CD4-positive, alpha-beta memory T cell (primary cell): ENCODE measurements at regions of chr7 and their contacts with region 1.

Region 1: DNA sequence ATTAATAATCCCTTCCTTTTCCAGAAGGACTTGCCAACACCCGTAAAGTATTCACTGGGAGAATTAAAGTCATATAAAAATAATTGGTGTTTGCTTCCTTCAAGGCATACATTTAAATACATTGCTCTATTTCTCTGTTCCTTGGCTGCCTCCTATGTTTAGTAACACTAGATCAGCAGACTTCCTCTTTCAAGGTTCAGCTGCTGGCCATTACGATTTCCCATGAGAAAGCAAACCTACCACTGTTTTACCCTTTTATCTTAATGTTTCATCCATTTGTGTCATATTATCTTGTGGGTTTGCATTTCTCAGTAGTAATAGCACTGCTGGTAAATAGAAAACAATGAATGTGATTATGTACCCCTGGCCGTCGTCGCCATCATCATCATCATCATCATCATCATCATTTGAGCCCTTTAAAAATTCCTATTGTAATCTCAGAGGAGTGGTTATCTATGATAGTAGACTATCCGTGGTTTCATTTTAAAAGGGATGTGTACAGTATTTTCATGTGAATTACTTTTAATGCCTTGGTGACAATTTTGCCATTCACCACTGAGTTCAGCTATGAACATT is 313.8 kb upstream of the BMPER start:
- DNase-seq: no peak
- H3K4me3 ChIP-seq: no peak overlapping the region
- H3K4me3 Mint-ChIP-seq: no peak overlapping the region
- H3K27ac ChIP-seq: no peak overlapping the region
- H3K27ac Mint-ChIP-seq: no peak overlapping the region
- H3K4me1 ChIP-seq: no peaks in the 10 kb centered on the region
- H3K4me1 Mint-ChIP-seq: no peaks in the 10 kb centered on the region
- H3K27me3 ChIP-seq: no peaks in the 10 kb centered on the region
- H3K27me3 Mint-ChIP-seq: no peaks in the 10 kb centered on the region

Region 2: DNA sequence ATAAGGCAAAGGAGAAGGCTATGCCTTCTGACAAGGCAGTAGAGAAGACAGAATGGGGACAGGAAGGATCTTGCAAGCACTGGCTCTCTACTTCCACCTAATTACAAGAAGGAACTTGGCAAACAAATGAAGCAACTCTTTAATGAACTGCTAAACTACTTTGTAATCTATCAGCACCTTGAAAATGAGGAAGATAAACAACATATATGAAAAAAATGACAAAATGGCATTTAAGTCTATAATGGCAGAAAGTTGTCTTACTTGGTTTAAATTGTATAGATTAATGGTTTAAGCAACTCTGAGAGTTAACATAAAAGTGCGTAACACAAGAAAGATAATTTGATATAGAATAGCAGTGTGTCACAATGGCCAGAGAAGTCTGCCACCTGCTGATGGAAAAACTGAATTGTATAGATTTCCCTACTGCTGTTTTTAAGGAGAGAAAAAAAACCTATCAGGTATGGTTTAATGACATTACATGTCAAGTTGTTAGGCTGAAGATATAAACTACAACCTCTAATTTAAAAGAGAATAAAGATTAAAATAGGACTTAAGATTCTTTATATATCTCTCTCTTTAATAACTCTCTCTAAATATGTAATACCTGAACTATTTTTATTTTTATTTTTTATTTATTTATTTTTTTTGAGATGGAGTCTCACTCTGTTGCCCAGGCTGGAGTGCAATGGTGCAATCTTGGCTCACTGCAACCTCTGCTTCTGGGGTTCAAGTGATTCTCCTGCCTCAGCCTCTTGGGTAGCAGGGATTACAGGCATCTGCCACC is 540.9 kb before region 1 on chr7:
- CTCF ChIA-PET with region 1: no interaction called
- POLR2A ChIA-PET with region 1: no interaction called
- intact Hi-C with region 1: no loop called
- DNase-seq: peak; percentile 41 to 61 (median 55)
- H3K4me3 ChIP-seq: no peak overlapping the region
- H3K4me3 Mint-ChIP-seq: peak overlapping the region in 1 of 8 donors; percentile 1
- H3K27ac ChIP-seq: no peak overlapping the region
- H3K27ac Mint-ChIP-seq: peak overlapping the region in 4 of 7 donors; percentile 10 to 39 (median 29)
- H3K4me1 ChIP-seq: peaks cover 50% of the 10 kb centered on the region
- H3K4me1 Mint-ChIP-seq: peaks cover 28 to 70% (median 47%) of the 10 kb centered on the region in 4 donors
- H3K27me3 ChIP-seq: no peaks in the 10 kb centered on the region
- H3K27me3 Mint-ChIP-seq: no peaks in the 10 kb centered on the region

Region 3: DNA sequence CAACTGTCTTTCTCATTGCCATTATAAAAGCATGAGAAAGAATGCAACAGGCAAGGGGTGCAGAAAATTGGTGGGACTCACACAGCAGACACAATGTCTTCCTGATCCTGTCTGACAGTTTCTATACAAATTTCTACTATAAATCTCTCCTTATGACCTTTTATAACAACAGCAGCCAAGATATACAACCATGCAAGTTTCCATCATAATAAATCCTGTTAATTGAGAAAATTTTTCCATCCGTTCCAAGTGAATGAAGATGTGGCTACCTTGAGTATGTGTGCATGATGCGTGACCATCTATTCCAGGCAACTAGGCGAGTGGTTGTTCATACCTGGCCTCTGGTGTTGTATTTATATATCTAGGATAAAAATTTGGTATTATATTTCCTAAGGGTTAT is 245.5 kb before region 1 on chr7:
- CTCF ChIA-PET with region 1: no interaction called
- POLR2A ChIA-PET with region 1: no interaction called
- intact Hi-C with region 1: no loop called
- DNase-seq: no peak
- H3K4me3 ChIP-seq: no peak overlapping the region
- H3K4me3 Mint-ChIP-seq: no peak overlapping the region
- H3K27ac ChIP-seq: no peak overlapping the region
- H3K27ac Mint-ChIP-seq: no peak overlapping the region
- H3K4me1 ChIP-seq: no peaks in the 10 kb centered on the region
- H3K4me1 Mint-ChIP-seq: no peaks in the 10 kb centered on the region
- H3K27me3 ChIP-seq: no peaks in the 10 kb centered on the region
- H3K27me3 Mint-ChIP-seq: no peaks in the 10 kb centered on the region

Region 4: DNA sequence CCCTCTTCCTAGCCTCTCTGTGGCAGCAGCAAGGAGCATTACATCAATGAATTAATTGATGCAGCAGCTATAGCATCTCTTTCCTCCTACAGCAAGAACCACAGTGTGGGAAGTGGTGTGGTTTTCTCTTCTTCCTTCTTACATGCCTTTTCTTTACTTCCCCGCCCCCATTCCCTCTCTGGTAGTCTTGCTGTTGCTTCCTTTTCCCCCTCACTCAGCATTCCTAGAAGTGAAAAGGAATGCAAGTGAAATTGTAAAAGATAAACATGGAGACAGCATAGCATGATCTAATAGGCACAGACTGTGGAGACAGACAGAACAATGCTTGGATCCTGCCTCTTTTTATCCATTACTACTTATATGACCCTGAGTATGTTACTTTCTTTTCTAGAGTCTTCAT is 56.7 kb before region 1 on chr7:
- CTCF ChIA-PET with region 1: no interaction called
- POLR2A ChIA-PET with region 1: no interaction called
- intact Hi-C with region 1: loop called (anchors 10 kb)
- DNase-seq: no peak
- H3K4me3 ChIP-seq: no peak overlapping the region
- H3K4me3 Mint-ChIP-seq: peak overlapping the region in 1 of 8 donors; percentile 2
- H3K27ac ChIP-seq: no peak overlapping the region
- H3K27ac Mint-ChIP-seq: no peak overlapping the region
- H3K4me1 ChIP-seq: no peaks in the 10 kb centered on the region
- H3K4me1 Mint-ChIP-seq: no peaks in the 10 kb centered on the region
- H3K27me3 ChIP-seq: no peaks in the 10 kb centered on the region
- H3K27me3 Mint-ChIP-seq: no peaks in the 10 kb centered on the region

Region 5: GRCh38 chr7:33639552-33640197 is 48.1 kb after region 1 on chr7:
- CTCF ChIA-PET with region 1: no interaction called
- POLR2A ChIA-PET with region 1: no interaction called
- intact Hi-C with region 1: no loop called
- DNase-seq: no peak
- H3K4me3 ChIP-seq: no peak overlapping the region
- H3K4me3 Mint-ChIP-seq: no peak overlapping the region
- H3K27ac ChIP-seq: no peak overlapping the region
- H3K27ac Mint-ChIP-seq: no peak overlapping the region
- H3K4me1 ChIP-seq: no peaks in the 10 kb centered on the region
- H3K4me1 Mint-ChIP-seq: peaks cover 0 to 1% (median 0%) of the 10 kb centered on the region in 4 donors
- H3K27me3 ChIP-seq: no peaks in the 10 kb centered on the region
- H3K27me3 Mint-ChIP-seq: no peaks in the 10 kb centered on the region